Naive thymus-derived CD4-positive, alpha-beta T cell (primary cell): ENCODE measurements at regions of chr16 and their contacts with region 1.

Region 1: GRCh38 chr16:53503270-53503923 is 388 bp upstream of the AKTIP start:
- DNase-seq: peak; percentile 94 to 100 (median 100)
- ATAC-seq: peak; percentile 94
- H3K4me3 ChIP-seq: peak overlapping the region; percentile 66
- H3K4me3 Mint-ChIP-seq: peak overlapping the region; percentile 86 to 97 (median 94)
- H3K27ac ChIP-seq: peak overlapping the region; percentile 79
- H3K27ac Mint-ChIP-seq: peak overlapping the region; percentile 82 to 98 (median 92)
- H3K4me1 ChIP-seq: peaks cover 25 to 38% of the 10 kb centered on the region in 2 donors
- H3K4me1 Mint-ChIP-seq: peaks cover 36 to 54% (median 45%) of the 10 kb centered on the region in 7 donors
- H3K27me3 ChIP-seq: no peaks in the 10 kb centered on the region
- H3K27me3 Mint-ChIP-seq: no peaks in the 10 kb centered on the region

Region 2: GRCh38 chr16:53099318-53100130 is 403.9 kb before region 1 on chr16:
- CTCF ChIA-PET with region 1: no interaction called
- POLR2A ChIA-PET with region 1: no interaction called
- intact Hi-C with region 1: loop called in 1 of 2 experiments (anchors 1 kb)
- DNase-seq: peak; percentile 4 to 65 (median 13)
- ATAC-seq: peak; percentile 68
- H3K4me3 ChIP-seq: peak overlapping the region; percentile 60
- H3K4me3 Mint-ChIP-seq: peak overlapping the region; percentile 79 to 96 (median 87)
- H3K27ac ChIP-seq: peak overlapping the region; percentile 29
- H3K27ac Mint-ChIP-seq: peak overlapping the region; percentile 12 to 91 (median 70)
- H3K4me1 ChIP-seq: peaks cover 11 to 24% of the 10 kb centered on the region in 2 donors
- H3K4me1 Mint-ChIP-seq: peaks cover 10 to 27% (median 17%) of the 10 kb centered on the region in 7 donors
- H3K27me3 ChIP-seq: no peaks in the 10 kb centered on the region
- H3K27me3 Mint-ChIP-seq: no peaks in the 10 kb centered on the region

Region 3: DNA sequence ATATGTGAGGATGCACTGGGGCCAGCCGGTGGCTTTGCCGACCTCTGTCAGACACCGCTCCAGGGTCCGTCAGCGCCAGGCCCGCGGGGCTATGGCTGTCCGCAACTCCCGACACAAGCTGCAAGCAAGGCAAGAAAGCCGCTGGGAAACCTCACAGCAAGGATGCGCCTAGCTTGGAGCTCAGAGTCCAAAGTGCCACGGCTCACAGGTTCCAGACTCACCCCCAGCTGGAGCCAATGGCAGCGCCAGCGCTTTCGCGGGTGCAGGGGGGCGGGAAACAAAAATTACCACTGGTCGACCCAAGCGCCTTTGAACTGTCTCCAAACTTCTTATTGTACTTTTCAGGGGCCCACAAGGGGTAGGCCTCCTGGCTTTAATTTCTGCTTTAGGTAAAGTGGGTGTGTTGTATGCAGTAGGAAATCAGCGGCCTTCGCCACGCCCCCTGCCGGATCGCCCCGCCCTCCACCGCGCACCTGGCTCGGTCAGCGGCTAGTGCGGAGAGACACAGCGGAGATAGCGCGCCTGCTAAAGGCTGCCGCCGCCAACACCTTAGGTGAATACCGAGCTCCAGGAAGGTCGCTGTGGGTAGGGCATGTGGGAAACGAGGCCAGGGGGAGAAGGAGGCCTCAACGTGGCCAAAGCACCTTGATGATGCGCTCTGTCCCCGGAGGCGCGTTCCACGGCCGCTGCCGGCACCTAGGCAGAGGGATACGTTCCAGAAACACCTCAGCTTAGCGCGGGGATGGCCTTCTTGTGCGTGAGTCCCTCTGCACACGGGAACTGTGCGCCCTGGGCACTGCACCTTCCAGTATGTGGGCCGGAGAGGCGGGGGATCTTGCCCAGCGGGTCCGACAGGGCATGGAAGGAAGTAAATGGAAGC is 130.2 kb before region 1 on chr16:
- CTCF ChIA-PET with region 1: interaction called, 3 read pairs
- POLR2A ChIA-PET with region 1: interaction called, 6 read pairs
- intact Hi-C with region 1: loop called (anchors 1 to 5 kb)
- DNase-seq: peak; percentile 64 to 87 (median 84)
- ATAC-seq: peak; percentile 96
- H3K4me3 ChIP-seq: peak overlapping the region; percentile 84
- H3K4me3 Mint-ChIP-seq: peak overlapping the region in 1 of 10 donors; percentile 86
- H3K27ac ChIP-seq: peak overlapping the region; percentile 67
- H3K27ac Mint-ChIP-seq: peak overlapping the region in 8 of 9 donors; percentile 48 to 95 (median 88)
- H3K4me1 ChIP-seq: peaks cover 4 to 7% of the 10 kb centered on the region in 2 donors
- H3K4me1 Mint-ChIP-seq: peaks cover 11 to 44% (median 20%) of the 10 kb centered on the region in 7 donors
- H3K27me3 ChIP-seq: no peaks in the 10 kb centered on the region
- H3K27me3 Mint-ChIP-seq: peaks cover 0 to 32% (median 0%) of the 10 kb centered on the region in 5 donors

Region 4: DNA sequence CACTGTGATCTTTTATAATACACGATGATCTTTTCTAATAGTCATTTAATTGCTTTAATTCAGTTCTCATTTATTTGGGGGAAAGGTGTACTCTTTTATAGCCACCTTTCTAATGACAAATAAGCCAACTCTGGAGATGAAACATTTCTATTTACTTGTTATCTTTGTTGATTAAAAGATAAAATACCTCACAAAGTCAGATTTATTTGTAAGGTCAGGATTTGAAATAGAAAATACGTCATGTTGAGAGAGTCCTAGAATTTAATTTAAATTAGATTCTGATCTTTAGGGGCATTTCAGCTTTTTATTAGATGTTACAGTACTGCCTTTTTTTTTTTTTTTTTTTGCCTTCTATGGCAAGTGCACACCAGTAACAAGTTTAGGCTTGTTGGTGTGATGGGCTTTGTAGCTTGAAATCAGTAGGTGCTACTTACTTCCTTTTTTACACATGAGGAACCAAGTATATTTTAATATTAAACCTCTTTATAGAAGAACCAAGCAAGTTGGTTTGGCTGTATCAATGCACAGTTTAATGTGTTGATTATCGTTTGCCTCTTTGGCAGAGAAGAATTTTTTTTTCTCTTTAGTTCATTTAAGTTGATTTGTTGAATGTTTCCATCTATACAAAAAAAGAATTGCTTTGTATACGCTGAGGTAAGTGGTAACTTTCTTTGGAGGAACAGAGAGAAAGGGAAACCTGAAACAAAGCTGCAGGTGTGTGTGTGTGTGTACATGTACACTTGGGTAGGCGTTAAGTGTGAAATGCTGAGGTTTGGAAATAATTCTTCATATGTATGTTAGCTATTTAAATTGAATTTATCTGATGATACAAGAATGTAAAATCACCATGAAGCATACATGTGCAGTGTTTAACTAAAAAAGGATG is 53.5 kb before region 1 on chr16:
- CTCF ChIA-PET with region 1: no interaction called
- POLR2A ChIA-PET with region 1: interaction called, 85 read pairs
- intact Hi-C with region 1: no loop called
- DNase-seq: peak in 3 of 9 donors; percentile 13 to 16 (median 15)
- ATAC-seq: peak; percentile 46
- H3K4me3 ChIP-seq: peak overlapping the region; percentile 43
- H3K4me3 Mint-ChIP-seq: peak overlapping the region; percentile 12 to 93 (median 80)
- H3K27ac ChIP-seq: peak overlapping the region; percentile 64
- H3K27ac Mint-ChIP-seq: peak overlapping the region; percentile 50 to 95 (median 86)
- H3K4me1 ChIP-seq: peaks cover 48 to 49% of the 10 kb centered on the region in 2 donors
- H3K4me1 Mint-ChIP-seq: peaks cover 30 to 91% (median 78%) of the 10 kb centered on the region in 7 donors
- H3K27me3 ChIP-seq: no peaks in the 10 kb centered on the region
- H3K27me3 Mint-ChIP-seq: no peaks in the 10 kb centered on the region

Region 5: DNA sequence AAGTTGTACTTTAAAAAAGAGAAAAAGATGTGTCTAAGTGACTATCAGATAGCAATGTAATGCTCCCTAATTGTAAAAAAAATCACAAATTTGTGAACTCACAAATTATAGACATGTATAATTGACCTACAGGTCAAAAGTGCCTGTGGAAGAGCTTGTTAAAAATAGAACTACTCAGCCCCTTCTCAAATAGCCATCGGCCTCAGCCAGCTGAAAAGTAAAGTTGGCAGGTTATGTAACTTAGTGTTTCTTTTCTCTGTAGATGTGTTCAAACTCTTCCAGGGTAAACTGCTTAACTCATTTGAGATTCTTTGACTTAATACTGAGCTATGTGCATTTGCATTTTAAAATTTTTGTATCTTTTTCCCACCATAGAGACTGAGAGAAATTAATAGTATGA is 13.6 kb before region 1 on chr16:
- CTCF ChIA-PET with region 1: no interaction called
- POLR2A ChIA-PET with region 1: interaction called, 14 read pairs
- intact Hi-C with region 1: loop called (anchors 2 kb)
- DNase-seq: no peak
- ATAC-seq: no peak
- H3K4me3 ChIP-seq: no peak overlapping the region
- H3K4me3 Mint-ChIP-seq: peak overlapping the region in 3 of 10 donors; percentile 21 to 51 (median 48)
- H3K27ac ChIP-seq: peak overlapping the region; percentile 42
- H3K27ac Mint-ChIP-seq: peak overlapping the region in 8 of 9 donors; percentile 52 to 95 (median 74)
- H3K4me1 ChIP-seq: peaks cover 0 to 4% of the 10 kb centered on the region in 2 donors
- H3K4me1 Mint-ChIP-seq: peaks cover 11 to 70% (median 55%) of the 10 kb centered on the region in 7 donors
- H3K27me3 ChIP-seq: no peaks in the 10 kb centered on the region
- H3K27me3 Mint-ChIP-seq: no peaks in the 10 kb centered on the region

Region 6: GRCh38 chr16:53518550-53519416 is 15.4 kb after region 1 on chr16:
- CTCF ChIA-PET with region 1: no interaction called
- POLR2A ChIA-PET with region 1: interaction called, 10 read pairs
- intact Hi-C with region 1: loop called (anchors 1 kb)
- DNase-seq: peak; percentile 26 to 87 (median 83)
- ATAC-seq: peak; percentile 95
- H3K4me3 ChIP-seq: peak overlapping the region; percentile 66
- H3K4me3 Mint-ChIP-seq: peak overlapping the region; percentile 70 to 90 (median 82)
- H3K27ac ChIP-seq: no peak overlapping the region
- H3K27ac Mint-ChIP-seq: peak overlapping the region in 8 of 9 donors; percentile 52 to 94 (median 86)
- H3K4me1 ChIP-seq: peaks cover 35 to 36% of the 10 kb centered on the region in 2 donors
- H3K4me1 Mint-ChIP-seq: peaks cover 38 to 63% (median 55%) of the 10 kb centered on the region in 7 donors
- H3K27me3 ChIP-seq: no peaks in the 10 kb centered on the region
- H3K27me3 Mint-ChIP-seq: peaks cover 0 to 28% (median 7%) of the 10 kb centered on the region in 5 donors